Right cardiac atrium (tissue), 5 donors: ENCODE measurements at regions of chr1 and their contacts with region 1.

Region 1: DNA sequence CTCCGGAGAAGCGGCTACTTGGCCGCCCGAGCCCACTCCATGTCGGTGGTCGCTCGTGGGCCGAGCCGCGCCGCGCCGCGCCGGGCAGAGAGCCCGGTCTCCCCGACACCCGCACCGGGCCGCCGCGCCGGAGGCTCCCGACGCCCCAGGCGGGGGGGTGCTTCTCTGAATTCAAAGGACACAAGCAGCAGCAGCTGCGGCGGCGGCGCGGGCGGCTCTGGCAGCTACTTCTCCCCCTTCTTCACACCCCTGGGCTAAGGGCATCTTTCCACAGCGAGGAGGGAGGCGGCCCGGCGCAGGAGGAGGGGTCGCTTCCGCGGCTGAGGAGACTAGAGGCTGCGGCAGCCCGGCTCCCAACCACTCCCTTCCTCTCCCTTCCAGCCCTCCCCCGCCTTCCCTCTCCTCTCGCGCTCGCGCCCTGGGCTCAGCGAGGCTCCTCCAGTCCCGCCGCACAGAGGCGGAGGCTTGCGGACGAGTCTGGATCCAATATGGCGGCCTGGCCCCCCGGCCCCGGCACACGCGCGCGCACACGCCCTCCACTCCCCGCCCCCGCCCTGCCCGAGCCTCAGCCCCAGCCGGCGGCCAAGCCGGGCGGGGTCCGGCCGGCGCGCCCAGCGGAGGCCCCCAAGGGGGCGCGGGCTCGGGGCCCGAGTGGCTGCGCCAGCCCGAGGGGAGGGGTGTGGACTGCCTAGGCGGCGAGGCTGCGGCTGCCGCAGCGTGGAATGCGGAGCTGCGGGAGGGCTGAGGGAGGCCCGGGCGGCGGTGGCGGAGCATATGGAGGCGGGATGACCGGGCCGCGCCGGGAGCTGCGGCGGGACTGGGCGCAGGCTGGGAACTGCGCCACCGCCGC is at the start of gene CDC42BPA:
- DNase-seq: peak; percentile 90 to 95 (median 94)
- ATAC-seq: peak; percentile 94 to 95
- H3K4me3 ChIP-seq: peak within 1 kb of the TSS; percentile 88
- H3K27ac ChIP-seq: peak within 1 kb of the TSS; percentile 98
- H3K4me1 ChIP-seq: no peaks in the 10 kb centered on the region
- H3K27me3 ChIP-seq: no peaks in the 10 kb centered on the region
- total RNA-seq, gene CDC42BPA: 34.6 to 38.0 (median 36.8) TPM

Region 2: GRCh38 chr1:227234998-227235405 is 83.2 kb before region 1 on chr1:
- intact Hi-C with region 1: loop called in 1 of 4 experiments (anchors 10 kb)
- DNase-seq: no peak
- ATAC-seq: peak; percentile 51 to 71
- H3K4me3 ChIP-seq: no peak overlapping the region
- H3K27ac ChIP-seq: no peak overlapping the region
- H3K4me1 ChIP-seq: peaks cover 3% of the 10 kb centered on the region
- H3K27me3 ChIP-seq: no peaks in the 10 kb centered on the region

Region 3: DNA sequence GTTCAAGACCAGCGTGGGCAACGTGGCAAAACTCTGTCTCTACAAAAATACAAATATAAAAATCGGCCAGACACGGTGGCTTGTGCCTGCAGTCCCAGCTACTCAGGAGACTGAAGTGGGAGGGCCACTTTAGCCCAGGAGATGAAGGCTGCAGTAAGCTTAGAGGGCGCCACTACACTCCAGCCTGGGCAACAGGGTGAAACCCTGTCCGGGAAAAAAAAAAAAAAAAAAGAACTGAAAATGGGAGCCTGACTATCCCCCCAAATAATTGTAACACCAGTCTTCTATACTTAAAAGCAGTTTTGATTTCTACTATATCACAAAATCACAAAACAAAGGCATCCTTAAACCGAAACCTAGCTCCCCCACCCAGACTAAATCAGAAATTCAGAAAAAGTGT is 60.3 kb before region 1 on chr1:
- intact Hi-C with region 1: no loop called
- DNase-seq: no peak
- ATAC-seq: no peak
- H3K4me3 ChIP-seq: no peak overlapping the region
- H3K27ac ChIP-seq: no peak overlapping the region
- H3K4me1 ChIP-seq: peaks cover 3% of the 10 kb centered on the region
- H3K27me3 ChIP-seq: no peaks in the 10 kb centered on the region

Region 4: GRCh38 chr1:227428803-227429202 is 110.6 kb after region 1 on chr1:
- intact Hi-C with region 1: loop called in 3 of 4 experiments (anchors 10 kb)
- DNase-seq: no peak
- ATAC-seq: peak in 1 of 2 donors; percentile 34
- H3K4me3 ChIP-seq: no peak overlapping the region
- H3K27ac ChIP-seq: no peak overlapping the region
- H3K4me1 ChIP-seq: peaks cover 13% of the 10 kb centered on the region
- H3K27me3 ChIP-seq: no peaks in the 10 kb centered on the region

Region 5: DNA sequence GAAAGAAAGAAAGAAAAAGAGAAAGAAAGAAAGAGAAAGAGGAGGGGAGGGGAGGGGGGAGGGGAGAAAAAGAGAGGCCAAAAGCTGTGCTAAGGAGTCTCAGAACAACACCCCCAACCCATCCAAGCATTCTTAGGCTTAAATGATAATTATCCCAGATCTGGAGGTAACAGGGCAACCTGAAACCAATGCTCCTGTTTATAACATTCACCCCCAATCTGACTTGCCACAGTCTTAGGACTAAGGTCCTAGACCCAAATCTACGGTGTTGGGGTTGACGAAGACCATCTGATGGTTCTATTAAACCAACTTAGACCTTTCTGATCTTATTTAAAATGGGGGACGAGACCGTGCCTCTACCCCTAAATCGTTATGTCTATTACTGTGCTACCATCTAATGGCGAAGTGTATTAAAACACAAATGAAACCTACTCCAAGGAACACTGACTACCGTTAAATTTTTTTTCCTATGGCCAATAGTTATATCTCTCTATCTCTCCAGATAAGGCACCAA is 119.3 kb after region 1 on chr1:
- intact Hi-C with region 1: loop called in 2 of 4 experiments (anchors 10 kb)
- DNase-seq: no peak
- ATAC-seq: peak; percentile 62 to 71
- H3K4me3 ChIP-seq: peak overlapping the region; percentile 21
- H3K27ac ChIP-seq: no peak overlapping the region
- H3K4me1 ChIP-seq: peaks cover 9% of the 10 kb centered on the region
- H3K27me3 ChIP-seq: no peaks in the 10 kb centered on the region